ENCODE measurements at regions of chrX and their contacts with region 1.

Region 1: GRCh38 chrX:39261446-39262147 is 460.3 kb downstream of the MID1IP1 start:
- DNase-seq: peak; percentile 1
- H3K4me3 Mint-ChIP-seq: no peak overlapping the region
- H3K27ac Mint-ChIP-seq: peak overlapping the region; percentile 89
- H3K4me1 Mint-ChIP-seq: peaks cover 43% of the 10 kb centered on the region
- H3K27me3 Mint-ChIP-seq: no peaks in the 10 kb centered on the region

Region 2: DNA sequence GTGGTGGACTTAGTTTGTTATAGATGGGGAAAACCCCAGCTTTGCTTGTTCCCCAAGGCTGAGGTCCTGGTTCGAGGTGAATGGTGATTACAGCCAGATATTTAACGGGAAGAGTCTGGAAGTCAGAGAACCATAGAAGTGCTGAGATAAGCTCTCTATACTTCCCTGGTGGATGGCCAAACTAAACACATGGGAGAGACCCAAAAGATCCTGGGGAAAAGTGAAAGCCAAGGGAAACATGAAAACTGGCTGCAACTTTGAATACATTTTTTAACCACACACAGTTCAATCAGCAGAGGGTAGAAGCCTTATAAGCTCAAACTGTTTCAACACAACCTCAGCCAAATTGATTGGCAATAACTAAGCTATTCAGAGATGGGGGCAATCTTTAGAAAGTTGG is 1011.6 kb before region 1 on chrX:
- intact Hi-C with region 1: no loop called
- DNase-seq: no peak
- H3K4me3 Mint-ChIP-seq: no peak overlapping the region
- H3K27ac Mint-ChIP-seq: no peak overlapping the region
- H3K4me1 Mint-ChIP-seq: no peaks in the 10 kb centered on the region
- H3K27me3 Mint-ChIP-seq: no peaks in the 10 kb centered on the region

Region 3: DNA sequence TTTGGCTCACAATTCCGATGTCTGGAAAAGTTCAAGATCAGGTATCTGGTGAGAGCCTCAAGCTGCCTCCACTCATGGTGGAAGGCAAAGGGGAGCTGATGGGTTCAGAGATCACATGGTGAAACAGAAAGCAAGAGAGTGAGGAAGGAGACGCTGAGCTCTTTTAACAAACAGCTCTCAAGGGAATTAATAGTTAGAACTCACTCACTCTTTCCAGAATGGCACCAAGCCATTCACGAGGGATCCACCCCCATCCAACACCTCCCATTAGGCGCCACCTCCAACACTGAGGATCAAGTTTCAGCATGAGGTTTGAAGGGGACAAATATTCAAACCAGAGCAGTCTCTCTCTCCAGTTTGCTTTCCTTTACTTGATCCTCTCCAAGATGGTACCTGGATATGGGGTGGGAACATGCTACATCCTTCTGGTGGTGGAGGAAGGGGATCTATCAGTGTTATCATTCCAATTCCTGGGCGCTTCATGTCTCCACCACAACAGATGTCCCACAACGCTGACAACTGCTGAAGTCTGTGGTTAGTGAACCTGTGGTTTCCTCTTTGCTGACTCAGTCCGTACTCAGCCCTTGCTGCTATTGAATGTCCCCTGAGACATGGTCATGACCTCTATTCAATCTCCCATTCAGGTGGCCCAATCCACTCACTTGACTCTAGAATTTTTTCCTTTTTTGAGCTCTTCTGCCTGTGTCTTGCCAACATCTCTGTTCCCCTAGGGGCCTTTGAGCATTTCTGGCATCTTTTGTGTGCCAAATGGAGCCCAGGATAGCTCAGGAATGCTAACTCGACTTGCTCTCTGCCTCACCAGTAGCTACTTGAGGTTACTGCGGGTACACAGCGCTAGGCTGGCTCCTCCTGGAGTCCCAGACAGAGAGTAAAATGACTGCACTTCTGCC is 65.2 kb before region 1 on chrX:
- intact Hi-C with region 1: loop called (anchors 5 kb)
- DNase-seq: peak; percentile 44
- H3K4me3 Mint-ChIP-seq: peak overlapping the region; percentile 58
- H3K27ac Mint-ChIP-seq: peak overlapping the region; percentile 87
- H3K4me1 Mint-ChIP-seq: peaks cover 52% of the 10 kb centered on the region
- H3K27me3 Mint-ChIP-seq: no peaks in the 10 kb centered on the region

Region 4: DNA sequence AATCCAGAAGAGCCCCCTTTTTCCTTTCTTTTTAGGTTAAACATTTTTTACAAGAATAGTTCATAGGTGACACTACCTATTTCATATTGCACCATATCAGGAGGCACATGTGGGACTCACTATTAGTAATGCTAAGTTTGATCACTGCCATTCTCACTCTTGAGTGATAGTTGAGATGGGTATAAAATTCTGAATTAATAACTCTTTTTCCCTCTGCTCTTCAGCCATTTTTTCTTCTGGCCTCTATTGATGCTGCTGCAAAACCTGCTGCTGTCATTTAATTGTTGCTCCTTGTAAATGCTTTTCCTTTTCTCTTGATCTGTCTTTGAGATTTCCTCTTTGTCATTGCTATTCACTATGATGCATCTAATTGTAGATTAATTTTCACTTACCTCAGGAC is 21.6 kb after region 1 on chrX:
- intact Hi-C with region 1: no loop called
- DNase-seq: no peak
- H3K4me3 Mint-ChIP-seq: no peak overlapping the region
- H3K27ac Mint-ChIP-seq: no peak overlapping the region
- H3K4me1 Mint-ChIP-seq: no peaks in the 10 kb centered on the region
- H3K27me3 Mint-ChIP-seq: no peaks in the 10 kb centered on the region

Region 5: DNA sequence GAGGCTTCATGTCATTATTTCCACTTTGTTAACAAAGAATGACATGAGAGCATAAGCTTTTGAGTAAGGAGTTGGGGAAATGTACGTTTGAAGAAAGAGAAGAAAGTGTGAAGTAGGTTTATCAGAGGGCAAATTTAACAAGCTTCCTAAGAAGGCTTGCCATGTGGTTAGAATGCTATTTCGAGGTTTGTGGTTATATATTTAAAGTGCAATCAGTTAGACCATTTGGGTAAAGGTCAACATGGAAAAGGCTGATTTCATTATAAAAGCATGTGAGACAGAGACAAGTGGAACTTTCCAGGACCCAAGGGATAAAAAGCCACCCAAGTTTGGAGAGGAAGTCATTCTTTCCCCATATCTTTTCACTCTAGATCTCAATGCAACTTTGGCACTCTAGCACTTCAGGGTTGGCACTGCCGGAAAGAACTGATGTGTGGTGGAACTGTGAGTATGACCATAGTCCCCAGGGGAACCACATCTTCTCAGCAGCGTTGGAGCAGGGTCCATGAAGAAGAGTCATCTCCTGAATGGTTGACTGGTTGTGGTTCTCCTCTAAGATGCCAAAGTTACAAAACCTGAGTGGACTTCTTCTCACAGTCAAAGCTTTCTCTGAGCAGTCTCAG is 69.6 kb after region 1 on chrX:
- intact Hi-C with region 1: loop called (anchors 1 kb)
- DNase-seq: peak; percentile 3
- H3K4me3 Mint-ChIP-seq: peak overlapping the region; percentile 42
- H3K27ac Mint-ChIP-seq: peak overlapping the region; percentile 76
- H3K4me1 Mint-ChIP-seq: peaks cover 73% of the 10 kb centered on the region
- H3K27me3 Mint-ChIP-seq: peaks cover 2% of the 10 kb centered on the region

Region 6: GRCh38 chrX:39445336-39445735 is 183.7 kb after region 1 on chrX:
- intact Hi-C with region 1: loop called (anchors 1 kb)
- DNase-seq: no peak
- H3K4me3 Mint-ChIP-seq: no peak overlapping the region
- H3K27ac Mint-ChIP-seq: no peak overlapping the region
- H3K4me1 Mint-ChIP-seq: peaks cover 45% of the 10 kb centered on the region
- H3K27me3 Mint-ChIP-seq: no peaks in the 10 kb centered on the region

Region 7: GRCh38 chrX:39504850-39505259 is 243.3 kb after region 1 on chrX:
- intact Hi-C with region 1: loop called (anchors 5 kb)
- DNase-seq: no peak
- H3K4me3 Mint-ChIP-seq: no peak overlapping the region
- H3K27ac Mint-ChIP-seq: no peak overlapping the region
- H3K4me1 Mint-ChIP-seq: peaks cover 26% of the 10 kb centered on the region
- H3K27me3 Mint-ChIP-seq: peaks cover 6% of the 10 kb centered on the region

Measured in activated T-helper 1 cell treated with anti-CD3 and anti-CD28 coated beads, Interleukin-12 subunit alpha, Interleukin-12 subunit beta, Interleukin-2, Interleukin-4 antibody, amounts not matched to agents 30 ng/mL and 10 ng/mL and 1 ng/mL, durations not matched to agents 14 hours and 24 hours and 36 hours (primary cell).